ENCODE measurements at regions of chr1 and their contacts with region 1.

Region 1: GRCh38 chr1:41416552-41417334 is 55.5 kb downstream of the FOXO6 start:
- DNase-seq: peak; percentile 39
- H3K4me3 Mint-ChIP-seq: no peak overlapping the region
- H3K27ac Mint-ChIP-seq: peak overlapping the region; percentile 13
- H3K4me1 Mint-ChIP-seq: no peaks in the 10 kb centered on the region
- H3K27me3 Mint-ChIP-seq: peaks cover 3% of the 10 kb centered on the region

Region 2: GRCh38 chr1:41268154-41268770 is 148.5 kb before region 1 on chr1:
- intact Hi-C with region 1: loop called (anchors 1 kb)
- DNase-seq: peak; percentile 36
- H3K4me3 Mint-ChIP-seq: no peak overlapping the region
- H3K27ac Mint-ChIP-seq: no peak overlapping the region
- H3K4me1 Mint-ChIP-seq: peaks cover 7% of the 10 kb centered on the region
- H3K27me3 Mint-ChIP-seq: peaks cover 16% of the 10 kb centered on the region

Region 3: DNA sequence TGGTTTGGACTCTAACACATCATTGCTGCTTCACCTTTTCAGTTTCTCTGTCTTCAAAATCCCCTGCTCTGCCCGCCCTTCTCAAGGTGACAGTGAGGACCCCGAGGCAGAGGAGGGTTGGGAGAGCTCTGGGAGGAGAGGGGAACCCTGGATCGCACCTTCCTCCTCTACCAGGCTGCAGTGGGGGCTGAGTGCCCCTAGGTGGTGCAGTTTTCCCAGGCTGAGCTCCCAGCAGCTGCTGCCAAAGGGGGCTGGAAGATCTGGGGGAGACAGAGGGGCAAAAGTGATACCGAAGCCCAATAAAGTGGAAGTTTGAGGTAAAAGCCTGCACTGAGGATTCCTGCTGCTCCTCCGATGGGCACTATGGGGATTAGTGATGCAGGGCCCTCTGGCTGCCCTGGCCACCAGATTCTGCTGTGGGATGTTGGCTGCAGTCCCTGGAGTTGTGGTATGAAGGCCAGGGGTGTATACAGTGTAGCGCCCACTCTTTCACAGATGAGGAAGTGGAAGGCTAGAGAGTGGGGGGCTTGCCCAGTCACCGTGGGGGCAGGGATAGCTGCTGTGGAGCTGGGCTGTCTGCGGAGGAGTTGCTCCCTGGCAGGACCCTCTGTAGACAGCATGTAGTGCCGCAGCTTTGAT is 133.9 kb before region 1 on chr1:
- intact Hi-C with region 1: loop called (anchors 1 kb)
- DNase-seq: no peak
- H3K4me3 Mint-ChIP-seq: no peak overlapping the region
- H3K27ac Mint-ChIP-seq: no peak overlapping the region
- H3K4me1 Mint-ChIP-seq: no peaks in the 10 kb centered on the region
- H3K27me3 Mint-ChIP-seq: peaks cover 16% of the 10 kb centered on the region

Region 4: GRCh38 chr1:41313661-41314131 is 103.0 kb before region 1 on chr1:
- intact Hi-C with region 1: loop called (anchors 1 kb)
- DNase-seq: no peak
- H3K4me3 Mint-ChIP-seq: no peak overlapping the region
- H3K27ac Mint-ChIP-seq: no peak overlapping the region
- H3K4me1 Mint-ChIP-seq: peaks cover 5% of the 10 kb centered on the region
- H3K27me3 Mint-ChIP-seq: peaks cover 5% of the 10 kb centered on the region

Region 5: DNA sequence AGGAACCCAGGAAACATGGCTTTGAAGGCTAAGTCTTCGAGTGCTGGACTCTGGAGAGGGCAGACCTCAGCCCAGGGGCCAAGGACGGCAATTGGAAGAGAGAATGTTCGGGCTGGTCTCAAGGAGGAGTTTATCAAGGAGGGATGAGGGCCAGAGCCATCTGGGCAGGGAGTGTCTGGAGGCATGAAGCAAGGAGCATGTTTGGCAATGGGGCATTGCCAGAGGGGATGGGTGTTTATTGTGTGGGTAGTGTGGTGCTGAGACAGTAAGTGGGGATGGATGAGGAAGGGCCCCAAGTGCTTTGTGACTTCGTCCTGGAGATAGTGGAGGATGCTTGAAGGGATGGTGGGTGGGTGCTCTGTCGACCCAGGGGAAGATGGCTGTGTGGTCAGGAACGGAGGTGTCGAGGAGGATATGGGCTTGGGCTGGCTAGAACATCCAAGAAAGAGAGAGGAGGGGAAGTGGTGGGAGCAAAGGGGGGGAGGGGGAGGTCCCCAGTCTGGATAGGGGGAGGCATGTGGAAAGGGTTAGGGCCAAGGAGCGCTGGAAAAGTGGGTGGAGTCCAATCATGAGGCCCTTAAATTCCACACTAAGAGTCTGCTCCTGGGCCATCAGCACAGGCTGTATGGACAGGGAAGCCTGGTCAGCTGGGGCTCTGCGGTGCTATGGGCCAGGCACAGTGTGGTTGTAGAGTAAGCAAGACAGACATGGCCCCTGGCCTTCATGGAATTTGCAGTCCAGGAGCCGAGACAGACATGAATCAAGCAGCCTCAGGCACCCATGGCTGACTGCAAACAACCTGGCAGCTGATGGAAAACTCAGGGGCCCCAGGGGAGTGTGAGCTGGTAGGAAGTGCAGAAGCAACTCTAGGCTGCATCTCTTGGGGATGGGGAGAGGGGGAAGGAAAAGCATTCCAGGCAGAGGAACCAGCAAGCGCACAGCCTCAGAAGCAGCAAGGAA is 31.3 kb after region 1 on chr1:
- intact Hi-C with region 1: no loop called
- DNase-seq: no peak
- H3K4me3 Mint-ChIP-seq: no peak overlapping the region
- H3K27ac Mint-ChIP-seq: no peak overlapping the region
- H3K4me1 Mint-ChIP-seq: no peaks in the 10 kb centered on the region
- H3K27me3 Mint-ChIP-seq: peaks cover 4% of the 10 kb centered on the region

Measured in activated T-helper 1 cell treated with anti-CD3 and anti-CD28 coated beads, Interleukin-12 subunit alpha, Interleukin-12 subunit beta, Interleukin-2, Interleukin-4 antibody, amounts not matched to agents 30 ng/mL and 10 ng/mL and 1 ng/mL, durations not matched to agents 14 hours and 24 hours and 36 hours (primary cell).